ENCODE measurements at regions of chr15 and their contacts with region 1.

Region 1: DNA sequence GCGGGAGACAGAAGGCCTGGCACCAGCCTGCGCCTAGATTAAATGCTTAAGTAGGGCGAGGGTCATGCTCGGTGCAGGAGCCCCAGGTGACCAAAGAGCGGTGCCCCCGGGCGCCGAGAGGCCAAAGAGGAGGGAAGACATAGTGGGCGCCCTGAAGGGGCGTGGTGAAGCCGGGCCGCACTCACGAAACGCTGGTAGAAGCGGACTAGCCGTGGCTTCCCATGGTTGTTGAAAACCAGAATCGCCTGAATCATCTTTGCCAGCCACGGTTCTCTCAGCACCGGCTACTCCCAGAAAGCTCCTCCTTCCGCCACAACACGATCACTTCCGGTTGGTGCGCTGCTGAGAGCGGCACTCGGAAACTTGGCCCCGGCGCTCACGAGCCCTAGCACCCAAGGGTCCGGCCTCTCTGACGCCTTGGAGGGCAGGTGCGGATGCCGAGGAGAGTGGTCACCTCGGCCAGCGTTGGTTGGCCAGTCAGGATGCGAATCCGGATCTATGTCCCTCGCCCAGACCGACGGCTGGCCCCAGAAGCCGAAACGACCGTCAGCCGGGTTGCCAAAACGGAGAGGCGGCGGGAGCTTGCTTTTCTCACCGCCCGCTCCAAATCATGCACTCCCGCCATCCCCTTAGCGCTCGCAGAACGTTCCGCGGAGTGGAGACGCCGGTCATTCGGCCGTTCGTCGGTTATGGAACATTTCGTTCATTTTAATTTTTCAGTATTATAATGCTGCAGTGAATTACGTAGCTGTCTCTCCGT is at the start of gene AP3S2:
- DNase-seq: peak; percentile 86
- H3K4me3 Mint-ChIP-seq: peak within 1 kb of the TSS; percentile 98
- H3K27ac Mint-ChIP-seq: peak within 1 kb of the TSS; percentile 97
- H3K4me1 Mint-ChIP-seq: peaks cover 28% of the 10 kb centered on the region
- H3K27me3 Mint-ChIP-seq: no peaks in the 10 kb centered on the region
- total RNA-seq, gene AP3S2: 20.6 and 24.6 TPM in 2 replicates

Region 2: GRCh38 chr15:89575146-89575655 is 318.7 kb before region 1 on chr15 and contains the start of gene TICRR:
- intact Hi-C with region 1: loop called (anchors 5 kb)
- DNase-seq: peak; percentile 97
- H3K4me3 Mint-ChIP-seq: peak within 1 kb of the TSS; percentile 92
- H3K27ac Mint-ChIP-seq: peak within 1 kb of the TSS; percentile 77
- H3K4me1 Mint-ChIP-seq: peaks cover 28% of the 10 kb centered on the region
- H3K27me3 Mint-ChIP-seq: peaks cover 14% of the 10 kb centered on the region
- total RNA-seq, gene TICRR: 18.0 and 18.7 TPM in 2 replicates

Region 3: DNA sequence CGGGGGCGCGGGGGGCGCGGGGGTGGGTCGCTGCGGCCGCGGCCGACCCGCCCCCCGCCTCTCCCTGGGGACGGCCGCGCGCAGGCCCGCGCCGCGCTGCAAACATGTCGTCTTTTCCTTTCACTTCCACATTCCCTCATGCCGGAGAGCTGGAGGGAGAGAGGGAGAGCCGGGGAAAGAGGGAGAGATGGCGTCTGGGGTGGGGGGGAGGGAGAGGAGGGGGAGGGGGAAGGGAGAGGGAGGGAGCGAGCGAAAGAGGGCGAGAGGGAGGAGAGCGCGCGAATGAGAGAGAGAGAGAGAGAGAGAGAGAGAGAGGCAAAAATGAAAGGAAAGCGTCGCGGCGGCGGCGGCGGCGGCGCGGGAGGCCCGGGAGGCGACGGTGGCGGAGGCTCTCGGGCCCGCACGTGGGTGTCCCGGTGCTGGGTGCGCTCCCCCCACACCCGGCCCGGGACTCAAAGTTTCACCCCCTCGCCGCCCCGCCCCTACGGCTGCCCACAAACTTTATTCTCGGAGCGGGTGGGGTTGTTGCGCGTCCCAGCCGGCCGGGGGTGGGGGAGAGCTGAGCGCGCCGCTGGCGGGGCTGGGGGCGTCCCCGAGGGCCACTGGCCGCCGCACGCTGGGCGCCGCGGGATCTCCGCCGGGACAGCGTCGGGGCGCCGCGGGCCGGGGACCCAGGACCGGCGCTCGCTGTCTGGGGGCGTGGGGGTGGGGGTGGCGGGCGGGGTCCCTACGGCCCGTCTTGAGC is 108.0 kb after region 1 on chr15:
- intact Hi-C with region 1: loop called (anchors 2 kb)
- DNase-seq: peak; percentile 60
- H3K4me3 Mint-ChIP-seq: peak overlapping the region; percentile 85
- H3K27ac Mint-ChIP-seq: peak overlapping the region; percentile 87
- H3K4me1 Mint-ChIP-seq: peaks cover 50% of the 10 kb centered on the region
- H3K27me3 Mint-ChIP-seq: no peaks in the 10 kb centered on the region

Region 4: DNA sequence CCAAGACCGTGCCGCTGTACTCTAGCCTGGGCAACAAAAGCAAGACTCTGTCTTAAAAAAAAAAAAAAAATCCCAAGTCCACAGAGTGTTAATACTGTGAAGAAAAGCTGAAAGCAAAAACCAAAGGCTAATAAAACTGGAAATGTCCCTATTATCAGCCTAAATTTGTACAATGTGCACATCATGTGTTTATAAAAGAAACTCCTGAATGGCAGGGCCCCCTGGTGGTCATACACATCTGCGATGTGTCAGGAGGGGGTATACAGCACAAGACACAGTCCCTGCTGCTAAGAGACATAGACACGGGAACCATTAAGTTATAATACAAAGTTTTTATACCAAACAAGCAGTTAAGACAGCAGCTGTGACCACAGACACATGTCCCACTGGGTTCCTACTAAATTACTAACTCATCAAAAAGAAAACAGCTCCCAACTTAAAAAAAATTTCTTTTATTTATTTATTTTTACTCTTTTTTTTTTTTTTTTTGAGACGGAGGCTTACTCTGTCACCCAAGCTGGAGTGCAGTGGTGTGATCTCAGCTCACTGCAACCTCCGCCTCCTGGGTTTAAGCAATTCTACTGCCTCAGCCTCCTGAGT is 177.4 kb after region 1 on chr15:
- intact Hi-C with region 1: loop called (anchors 1 kb)
- DNase-seq: peak; percentile 65
- H3K4me3 Mint-ChIP-seq: no peak overlapping the region
- H3K27ac Mint-ChIP-seq: peak overlapping the region; percentile 12
- H3K4me1 Mint-ChIP-seq: peaks cover 7% of the 10 kb centered on the region
- H3K27me3 Mint-ChIP-seq: no peaks in the 10 kb centered on the region

Region 5: DNA sequence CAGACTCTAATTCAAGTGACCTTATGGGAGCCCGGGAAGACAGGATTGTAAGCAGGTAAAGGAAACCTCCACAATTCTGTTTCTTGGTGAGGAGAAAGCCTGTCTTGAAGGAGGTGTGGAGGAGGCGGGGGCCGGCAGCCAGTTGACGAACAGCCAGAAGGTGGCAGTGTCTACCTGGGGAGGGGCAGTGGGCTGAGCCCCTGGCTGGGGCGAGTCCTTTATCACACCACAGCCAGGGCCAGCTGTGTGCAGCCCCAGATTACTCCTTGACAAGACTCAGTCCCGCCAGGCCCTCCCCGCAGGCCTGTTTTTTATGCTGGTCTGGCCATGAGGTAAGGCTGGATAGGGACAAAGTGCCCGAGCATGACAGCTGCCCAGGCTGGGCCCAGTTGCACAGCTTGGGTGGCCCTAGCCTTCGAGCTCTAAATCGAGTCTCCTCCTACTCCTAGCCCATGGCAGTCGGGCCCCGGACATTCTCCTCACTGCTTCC is 249.3 kb after region 1 on chr15:
- intact Hi-C with region 1: loop called (anchors 5 kb)
- DNase-seq: peak; percentile 70
- H3K4me3 Mint-ChIP-seq: no peak overlapping the region
- H3K27ac Mint-ChIP-seq: peak overlapping the region; percentile 54
- H3K4me1 Mint-ChIP-seq: peaks cover 27% of the 10 kb centered on the region
- H3K27me3 Mint-ChIP-seq: no peaks in the 10 kb centered on the region